ENCODE measurements at regions of chr15 and their contacts with region 1.

Region 1: DNA sequence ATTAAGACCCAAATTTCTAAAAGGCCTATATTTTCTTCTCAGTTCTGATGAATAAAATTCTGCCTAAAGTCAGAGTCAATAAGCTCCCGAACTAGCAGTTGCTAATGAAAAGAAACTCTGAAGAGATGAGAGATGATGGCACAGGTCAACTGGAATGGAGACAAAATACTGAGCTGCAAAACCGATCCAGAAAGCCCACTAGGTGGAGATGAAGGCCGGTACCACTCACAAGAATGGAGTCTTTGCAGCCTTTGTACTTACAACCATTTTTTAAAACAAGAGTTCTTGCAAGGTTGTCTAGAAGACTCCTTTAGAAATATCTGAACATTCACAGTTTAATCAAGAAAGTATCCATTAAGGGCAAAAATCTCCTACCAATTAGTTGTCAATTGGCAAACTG is 119.9 kb upstream of the TJP1 start:
- DNase-seq: peak; percentile 55
- H3K4me3 ChIP-seq: no peak overlapping the region
- H3K27ac ChIP-seq: no peak overlapping the region
- H3K4me1 ChIP-seq: peaks cover 3% of the 10 kb centered on the region
- H3K27me3 ChIP-seq: no peaks in the 10 kb centered on the region
- CTCF ChIP-seq: peak in 2 of 3 experiments; percentile 32 to 39
- POLR2A ChIP-seq: no peak

Region 2: DNA sequence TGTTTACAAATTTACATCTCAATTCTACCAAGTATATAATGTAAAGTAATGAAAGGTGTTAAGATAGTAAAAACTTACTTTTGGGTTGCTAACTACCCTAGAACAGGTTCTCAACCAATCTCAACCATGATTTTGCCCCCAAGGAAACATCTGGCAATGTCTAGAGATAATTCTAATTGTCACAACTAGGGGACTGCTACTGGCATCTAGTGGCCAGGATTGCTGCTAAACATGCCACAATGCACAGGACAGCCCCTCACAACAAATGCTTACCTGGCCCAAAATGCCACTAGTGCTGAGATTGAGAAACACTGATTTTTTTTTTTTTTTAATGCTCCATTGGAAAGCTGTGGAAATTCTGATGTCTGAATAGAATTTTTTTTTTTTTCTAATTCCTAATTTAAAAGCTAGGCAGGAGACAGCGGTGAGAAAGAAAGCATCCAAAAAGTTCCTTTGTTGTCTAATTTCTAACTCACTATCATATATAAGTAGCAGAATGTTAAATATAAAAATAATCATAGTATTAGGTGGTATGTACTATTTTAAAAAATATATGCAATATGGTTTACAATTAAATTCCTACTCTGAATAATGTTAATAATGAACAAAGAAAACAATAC is 201.3 kb before region 1 on chr15:
- intact Hi-C with region 1: no loop called
- DNase-seq: no peak
- H3K4me3 ChIP-seq: no peak overlapping the region
- H3K27ac ChIP-seq: no peak overlapping the region
- H3K4me1 ChIP-seq: no peaks in the 10 kb centered on the region
- H3K27me3 ChIP-seq: no peaks in the 10 kb centered on the region
- CTCF ChIP-seq: no peak
- POLR2A ChIP-seq: no peak

Region 3: GRCh38 chr15:30059771-30060170 is 117.6 kb after region 1 on chr15:
- intact Hi-C with region 1: loop called (anchors 10 kb)
- DNase-seq: no peak
- H3K4me3 ChIP-seq: no peak overlapping the region
- H3K27ac ChIP-seq: no peak overlapping the region
- H3K4me1 ChIP-seq: peaks cover 7% of the 10 kb centered on the region
- H3K27me3 ChIP-seq: no peaks in the 10 kb centered on the region
- CTCF ChIP-seq: no peak
- POLR2A ChIP-seq: no peak

Measured in testis (tissue), 5 donors.